ENCODE measurements at regions of chr2 and their contacts with region 1.

Region 1: DNA sequence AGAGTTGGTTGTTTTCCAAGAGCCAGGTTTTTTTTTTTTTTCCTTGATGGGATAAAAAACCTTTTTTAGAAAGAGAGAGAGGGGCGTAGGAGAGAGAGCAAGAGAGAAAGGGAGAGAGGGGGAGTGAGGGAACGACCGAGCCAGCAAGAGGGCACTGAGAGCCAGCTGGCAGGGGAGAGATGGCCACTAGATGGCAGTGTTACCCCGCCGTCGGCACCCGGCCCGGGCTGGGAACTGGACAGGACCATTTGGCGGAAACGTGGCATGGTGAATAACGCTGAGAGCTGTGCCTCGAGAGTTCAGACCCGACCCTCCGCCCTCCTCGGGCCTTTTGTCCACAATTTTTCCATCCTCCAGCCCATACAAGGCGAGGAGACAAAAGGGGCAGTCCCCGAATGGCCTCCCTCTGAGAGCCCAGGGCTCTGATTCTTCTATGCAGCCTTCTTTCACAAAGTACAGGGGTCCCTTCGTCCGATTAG is 286.7 kb upstream of the VRK2 start:
- DNase-seq: peak; percentile 77
- ATAC-seq: peak; percentile 92
- H3K4me3 Mint-ChIP-seq: peak overlapping the region; percentile 72
- H3K27ac Mint-ChIP-seq: no peak overlapping the region
- H3K4me1 Mint-ChIP-seq: peaks cover 28% of the 10 kb centered on the region
- H3K27me3 Mint-ChIP-seq: no peaks in the 10 kb centered on the region
- CTCF ChIP-seq: peak; percentile 98

Region 2: GRCh38 chr2:57796527-57796926 is 36.7 kb after region 1 on chr2:
- CTCF ChIA-PET with region 1: no interaction called
- POLR2A ChIA-PET with region 1: no interaction called
- intact Hi-C with region 1: no loop called
- DNase-seq: no peak
- ATAC-seq: no peak
- H3K4me3 Mint-ChIP-seq: no peak overlapping the region
- H3K27ac Mint-ChIP-seq: no peak overlapping the region
- H3K4me1 Mint-ChIP-seq: no peaks in the 10 kb centered on the region
- H3K27me3 Mint-ChIP-seq: no peaks in the 10 kb centered on the region
- CTCF ChIP-seq: no peak

Region 3: GRCh38 chr2:57943276-57943675 is 183.4 kb after region 1 on chr2:
- CTCF ChIA-PET with region 1: no interaction called
- POLR2A ChIA-PET with region 1: no interaction called
- intact Hi-C with region 1: no loop called
- DNase-seq: no peak
- ATAC-seq: no peak
- H3K4me3 Mint-ChIP-seq: no peak overlapping the region
- H3K27ac Mint-ChIP-seq: no peak overlapping the region
- H3K4me1 Mint-ChIP-seq: no peaks in the 10 kb centered on the region
- H3K27me3 Mint-ChIP-seq: no peaks in the 10 kb centered on the region
- CTCF ChIP-seq: no peak

Region 4: GRCh38 chr2:58448065-58448507 is 688.2 kb after region 1 on chr2:
- CTCF ChIA-PET with region 1: interaction called, 11 read pairs
- POLR2A ChIA-PET with region 1: no interaction called
- intact Hi-C with region 1: loop called (anchors 1 kb)
- DNase-seq: no peak
- ATAC-seq: no peak
- H3K4me3 Mint-ChIP-seq: no peak overlapping the region
- H3K27ac Mint-ChIP-seq: no peak overlapping the region
- H3K4me1 Mint-ChIP-seq: peaks cover 3% of the 10 kb centered on the region
- H3K27me3 Mint-ChIP-seq: no peaks in the 10 kb centered on the region
- CTCF ChIP-seq: no peak

Region 5: GRCh38 chr2:58680755-58681310 is 921.0 kb after region 1 on chr2:
- CTCF ChIA-PET with region 1: no interaction called
- POLR2A ChIA-PET with region 1: no interaction called
- intact Hi-C with region 1: loop called (anchors 1 kb)
- DNase-seq: no peak
- ATAC-seq: no peak
- H3K4me3 Mint-ChIP-seq: no peak overlapping the region
- H3K27ac Mint-ChIP-seq: no peak overlapping the region
- H3K4me1 Mint-ChIP-seq: no peaks in the 10 kb centered on the region
- H3K27me3 Mint-ChIP-seq: no peaks in the 10 kb centered on the region
- CTCF ChIP-seq: no peak

Region 6: GRCh38 chr2:58871469-58872142 is 1111.7 kb after region 1 on chr2:
- CTCF ChIA-PET with region 1: interaction called, 6 read pairs
- POLR2A ChIA-PET with region 1: no interaction called
- intact Hi-C with region 1: loop called (anchors 1 kb)
- DNase-seq: no peak
- ATAC-seq: no peak
- H3K4me3 Mint-ChIP-seq: no peak overlapping the region
- H3K27ac Mint-ChIP-seq: no peak overlapping the region
- H3K4me1 Mint-ChIP-seq: no peaks in the 10 kb centered on the region
- H3K27me3 Mint-ChIP-seq: peaks cover 4% of the 10 kb centered on the region
- CTCF ChIP-seq: no peak

Region 7: DNA sequence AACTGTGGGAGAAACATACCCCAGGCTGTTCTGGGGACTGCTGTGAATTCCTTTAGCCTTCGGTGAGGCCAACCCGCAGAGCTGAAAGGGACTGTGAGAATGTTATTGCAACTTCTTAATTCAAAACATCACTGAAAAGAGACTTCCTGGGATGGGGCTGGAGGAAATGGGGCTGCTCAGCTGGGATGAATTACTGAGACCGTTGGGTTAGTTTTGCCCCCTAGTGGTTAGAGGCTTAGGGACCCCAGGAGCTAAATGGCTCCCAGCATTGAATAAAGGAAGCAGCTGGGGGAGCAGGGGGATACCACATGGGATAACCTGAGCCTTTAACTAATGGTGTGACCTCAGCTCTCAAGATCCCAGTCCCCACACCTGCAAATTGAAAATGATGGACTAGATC is 1422.4 kb after region 1 on chr2:
- CTCF ChIA-PET with region 1: no interaction called
- POLR2A ChIA-PET with region 1: no interaction called
- intact Hi-C with region 1: loop called (anchors 5 kb)
- DNase-seq: no peak
- ATAC-seq: no peak
- H3K4me3 Mint-ChIP-seq: no peak overlapping the region
- H3K27ac Mint-ChIP-seq: no peak overlapping the region
- H3K4me1 Mint-ChIP-seq: peaks cover 28% of the 10 kb centered on the region
- H3K27me3 Mint-ChIP-seq: peaks cover 5% of the 10 kb centered on the region
- CTCF ChIP-seq: no peak

Region 8: GRCh38 chr2:59538380-59538911 is 1778.6 kb after region 1 on chr2:
- CTCF ChIA-PET with region 1: no interaction called
- POLR2A ChIA-PET with region 1: interaction called, 10 read pairs
- intact Hi-C with region 1: no loop called
- DNase-seq: no peak
- ATAC-seq: no peak
- H3K4me3 Mint-ChIP-seq: no peak overlapping the region
- H3K27ac Mint-ChIP-seq: no peak overlapping the region
- H3K4me1 Mint-ChIP-seq: no peaks in the 10 kb centered on the region
- H3K27me3 Mint-ChIP-seq: peaks cover 2% of the 10 kb centered on the region
- CTCF ChIP-seq: no peak

Measured in activated B cell treated with CpG ODN at 0.5 μM for 24 hours (primary cell).